K562 (cell line): ENCODE measurements at regions of chr19 and their contacts with region 1.

Region 1: GRCh38 chr19:57279418-57280066 is 743 bp upstream of the ZNF460 start:
- DNase-seq: peak; percentile 83 to 95 (median 90)
- ATAC-seq: peak; percentile 96
- H3K4me3 ChIP-seq: peak overlapping the region; percentile 67
- H3K27ac ChIP-seq: peak overlapping the region; percentile 99
- H3K4me1 ChIP-seq: peaks cover 0 to 14% of the 10 kb centered on the region in 2 experiments; a peak in 3 of 5 replicates
- H3K27me3 ChIP-seq: no peaks in the 10 kb centered on the region
- CTCF ChIP-seq: peak; percentile 55 to 61 (median 58); a peak in 5 of 6 replicates
- EP300 ChIP-seq: peak; percentile 51
- POLR2A ChIP-seq: peak; percentile 95; the same call in 1 of the 2 replicates
- RAD21 ChIP-seq: peak; percentile 32 to 57

Region 2: DNA sequence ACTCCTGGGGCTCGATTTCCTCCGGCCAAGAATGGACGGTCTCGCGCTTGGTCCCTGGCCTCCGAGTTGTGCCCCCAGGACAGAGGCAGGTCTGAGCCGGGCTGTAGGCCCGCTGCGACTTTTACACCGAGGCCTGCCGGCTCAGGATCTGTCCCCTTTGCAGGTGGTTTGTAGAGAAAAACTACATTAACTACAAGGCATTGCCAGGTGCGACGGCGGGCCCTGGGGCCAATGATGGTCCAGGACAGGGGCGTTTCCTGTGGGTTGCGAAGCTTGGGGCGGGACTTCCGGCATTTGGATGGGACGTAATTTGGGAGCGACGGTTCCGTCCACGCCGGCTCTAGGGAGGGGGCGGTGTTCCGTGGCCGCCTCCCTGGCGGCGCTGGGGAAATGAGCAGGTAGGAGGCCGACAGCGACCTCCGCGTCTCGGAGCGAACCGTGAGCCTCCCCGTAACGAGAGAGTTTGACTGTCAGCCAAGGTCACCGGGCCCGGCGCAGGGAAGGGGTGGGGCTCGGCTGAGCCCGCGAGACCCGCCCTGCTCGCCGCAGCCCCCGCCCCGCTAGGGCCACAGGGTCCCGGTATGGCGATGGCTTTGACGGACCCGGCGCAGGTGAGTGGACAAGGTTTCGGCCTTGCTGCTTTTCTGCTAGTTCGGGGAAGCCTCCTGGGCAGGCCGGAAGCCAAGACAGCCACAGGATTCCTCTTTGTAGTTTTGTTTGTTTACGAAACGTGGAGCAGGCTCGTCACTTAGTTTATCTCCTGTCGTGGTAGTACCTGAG is 39.0 kb before region 1 on chr19 and contains the start of gene ZNF805:
- CTCF ChIA-PET with region 1: no interaction called
- POLR2A ChIA-PET with region 1: interaction called, 3 read pairs
- in situ Hi-C with region 1: no loop called
- intact Hi-C with region 1: loop called (anchors 5 kb)
- DNase-seq: peak; percentile 93 to 94 (median 94)
- ATAC-seq: peak; percentile 96
- H3K4me3 ChIP-seq: peak within 1 kb of the TSS; percentile 63
- H3K27ac ChIP-seq: peak within 1 kb of the TSS; percentile 84
- H3K4me1 ChIP-seq: peaks cover 7 to 10% of the 10 kb centered on the region in 2 experiments; a peak in 4 of 5 replicates
- H3K27me3 ChIP-seq: no peaks in the 10 kb centered on the region
- CTCF ChIP-seq: 0 out of 6 replicates have a peak, but pooled peaks of 1 of the 3 experiments have one; percentile 14
- EP300 ChIP-seq: peak; percentile 29; the same call in 1 of the 2 replicates
- POLR2A ChIP-seq: peak; percentile 84
- RAD21 ChIP-seq: no peak
- polyA plus RNA-seq, gene ZNF805: 0.32 to 0.77 TPM

Region 3: GRCh38 chr19:57334191-57334590 is 54.6 kb after region 1 on chr19:
- CTCF ChIA-PET with region 1: no interaction called
- POLR2A ChIA-PET with region 1: no interaction called
- in situ Hi-C with region 1: no loop called
- intact Hi-C with region 1: no loop called
- DNase-seq: no peak
- ATAC-seq: no peak
- H3K4me3 ChIP-seq: no peak overlapping the region
- H3K27ac ChIP-seq: no peak overlapping the region
- H3K4me1 ChIP-seq: no peaks in the 10 kb centered on the region
- H3K27me3 ChIP-seq: no peaks in the 10 kb centered on the region
- CTCF ChIP-seq: no peak
- EP300 ChIP-seq: no peak
- POLR2A ChIP-seq: no peak
- RAD21 ChIP-seq: no peak

Region 4: GRCh38 chr19:57435062-57435978 is 155.8 kb after region 1 on chr19 and contains the start of gene ZNF749:
- CTCF ChIA-PET with region 1: no interaction called
- POLR2A ChIA-PET with region 1: no interaction called
- in situ Hi-C with region 1: no loop called
- intact Hi-C with region 1: loop called (anchors 1 kb)
- DNase-seq: peak; percentile 94 to 99 (median 95)
- ATAC-seq: peak; percentile 97
- H3K4me3 ChIP-seq: peak within 1 kb of the TSS; percentile 78
- H3K27ac ChIP-seq: peak within 1 kb of the TSS; percentile 65
- H3K4me1 ChIP-seq: peaks cover 5 to 9% of the 10 kb centered on the region in 2 experiments; a peak in 3 of 5 replicates
- H3K27me3 ChIP-seq: no peaks in the 10 kb centered on the region
- CTCF ChIP-seq: 0 out of 6 replicates have a peak, but pooled peaks of 1 of the 3 experiments have one; percentile 6
- EP300 ChIP-seq: no peak
- POLR2A ChIP-seq: peak; percentile 83
- RAD21 ChIP-seq: no peak
- polyA plus RNA-seq, gene ZNF749: 5.3 to 7.8 TPM